Prostate gland (tissue), 2 donors: ENCODE measurements at regions of chr17 and their contacts with region 1.

Region 1: DNA sequence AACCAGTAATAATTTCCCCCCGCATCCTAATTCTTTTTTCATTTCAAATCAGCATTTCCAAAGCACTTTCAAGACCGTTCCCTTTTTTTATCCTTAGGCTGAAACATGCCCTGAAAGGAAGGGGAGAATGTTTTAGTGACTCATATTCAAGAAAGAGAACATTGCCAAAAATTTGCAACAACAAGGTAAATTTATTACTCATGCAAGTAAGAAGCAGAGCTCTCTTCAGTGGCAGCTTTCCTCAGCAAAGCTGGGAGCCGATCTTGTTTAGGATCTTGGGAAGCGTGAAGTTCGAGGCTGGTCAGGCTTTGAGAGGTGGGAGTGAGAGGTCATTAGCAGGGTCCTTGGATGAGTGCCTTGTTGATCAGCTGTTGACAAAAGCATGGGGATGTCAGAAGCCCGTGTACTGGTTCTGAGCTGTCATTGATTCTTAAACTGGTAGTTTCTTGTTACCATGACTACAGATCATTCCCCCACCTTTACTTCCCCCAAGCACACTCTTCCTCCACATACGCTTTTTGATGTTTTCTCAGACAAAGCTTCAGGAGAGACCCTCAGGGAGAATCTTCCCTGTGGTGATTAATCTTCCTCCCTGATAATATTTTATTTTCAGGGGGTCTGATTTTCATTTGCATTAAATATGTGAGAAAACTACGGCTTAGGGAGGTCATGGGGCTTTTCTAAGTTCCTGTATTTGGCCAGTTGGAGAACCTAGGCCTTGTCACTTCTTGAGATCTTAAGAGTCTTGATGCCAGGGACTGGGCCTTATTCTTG is 129.7 kb downstream of the PRKCA start:
- DNase-seq: no peak
- H3K4me3 ChIP-seq: no peak overlapping the region
- H3K27ac ChIP-seq: peak overlapping the region in 1 of 2 donors; percentile 37
- H3K4me1 ChIP-seq: no peaks in the 10 kb centered on the region
- H3K27me3 ChIP-seq: no peaks in the 10 kb centered on the region
- CTCF ChIP-seq: no peak
- POLR2A ChIP-seq: no peak

Region 2: DNA sequence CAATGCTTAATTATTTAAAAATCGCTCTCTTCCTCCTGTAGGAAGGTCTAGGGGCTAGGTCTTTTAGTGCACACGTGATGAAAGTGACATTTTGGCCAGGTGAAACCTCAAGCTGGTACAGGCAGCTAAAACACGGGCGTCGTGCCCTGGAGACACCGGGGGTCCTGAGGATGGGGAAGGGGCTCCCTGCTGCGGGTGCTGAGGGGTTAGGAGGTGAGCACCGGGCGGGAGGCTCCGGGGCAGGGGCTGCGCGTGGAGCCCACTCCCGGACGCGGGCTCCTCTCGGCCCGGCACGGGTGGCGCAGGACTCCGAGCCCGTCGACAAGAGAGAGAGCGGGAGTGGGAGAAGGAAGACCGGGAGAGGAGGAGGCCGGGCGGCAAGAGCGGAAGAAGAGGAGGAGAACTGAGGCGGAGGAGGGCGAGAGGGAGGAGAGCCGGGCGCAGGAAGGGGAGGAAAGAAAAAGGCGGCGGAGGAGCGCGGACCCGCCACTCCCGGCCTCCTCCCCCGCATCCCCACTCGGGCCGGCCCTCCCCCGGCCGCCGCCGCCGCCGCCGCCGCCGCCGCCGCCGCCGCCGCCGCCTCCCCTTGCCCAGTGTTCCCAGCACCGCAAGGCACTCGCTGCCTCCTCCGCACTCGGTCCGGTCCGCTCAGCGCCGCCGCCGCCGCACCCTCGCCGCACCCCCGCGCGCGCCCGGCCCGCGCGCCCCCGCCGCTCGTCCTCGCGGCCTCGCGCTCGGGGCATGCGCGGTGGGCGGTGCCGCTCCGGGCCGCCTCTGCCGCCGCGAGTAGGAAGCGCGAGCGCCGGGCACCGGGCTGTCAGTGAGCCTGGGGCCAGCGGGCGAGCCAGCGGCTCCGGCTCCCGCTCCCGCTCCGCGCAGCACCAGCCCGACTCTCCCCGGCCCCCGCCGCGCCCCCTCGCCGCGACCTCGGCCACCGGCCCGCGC is 130.0 kb before region 1 on chr17 and contains the start of gene PRKCA:
- intact Hi-C with region 1: loop called (anchors 5 kb)
- DNase-seq: peak; percentile 64
- H3K4me3 ChIP-seq: peak within 1 kb of the TSS; percentile 46 to 64
- H3K27ac ChIP-seq: peak within 1 kb of the TSS; percentile 79
- H3K4me1 ChIP-seq: no peaks in the 10 kb centered on the region
- H3K27me3 ChIP-seq: no peaks in the 10 kb centered on the region
- CTCF ChIP-seq: no peak
- POLR2A ChIP-seq: peak; percentile 82
- total RNA-seq, gene PRKCA: 8.3 to 26.5 TPM

Region 3: GRCh38 chr17:66383333-66383732 is 48.8 kb before region 1 on chr17:
- intact Hi-C with region 1: no loop called
- DNase-seq: no peak
- H3K4me3 ChIP-seq: no peak overlapping the region
- H3K27ac ChIP-seq: no peak overlapping the region
- H3K4me1 ChIP-seq: no peaks in the 10 kb centered on the region
- H3K27me3 ChIP-seq: no peaks in the 10 kb centered on the region
- CTCF ChIP-seq: no peak
- POLR2A ChIP-seq: no peak

Region 4: GRCh38 chr17:66466840-66467367 is 34.8 kb after region 1 on chr17:
- intact Hi-C with region 1: loop called (anchors 5 kb)
- DNase-seq: no peak
- H3K4me3 ChIP-seq: no peak overlapping the region
- H3K27ac ChIP-seq: no peak overlapping the region
- H3K4me1 ChIP-seq: no peaks in the 10 kb centered on the region
- H3K27me3 ChIP-seq: no peaks in the 10 kb centered on the region
- CTCF ChIP-seq: no peak
- POLR2A ChIP-seq: no peak

Region 5: GRCh38 chr17:66514227-66514806 is 82.2 kb after region 1 on chr17:
- intact Hi-C with region 1: no loop called
- DNase-seq: no peak
- H3K4me3 ChIP-seq: no peak overlapping the region
- H3K27ac ChIP-seq: no peak overlapping the region
- H3K4me1 ChIP-seq: peaks cover 5% of the 10 kb centered on the region
- H3K27me3 ChIP-seq: no peaks in the 10 kb centered on the region
- CTCF ChIP-seq: no peak
- POLR2A ChIP-seq: no peak

Region 6: GRCh38 chr17:66533572-66533971 is 101.5 kb after region 1 on chr17:
- intact Hi-C with region 1: loop called (anchors 5 kb)
- DNase-seq: peak; percentile 15
- H3K4me3 ChIP-seq: no peak overlapping the region
- H3K27ac ChIP-seq: peak overlapping the region; percentile 12 to 27
- H3K4me1 ChIP-seq: no peaks in the 10 kb centered on the region
- H3K27me3 ChIP-seq: no peaks in the 10 kb centered on the region
- CTCF ChIP-seq: peak in 1 of 4 experiments; percentile 6
- POLR2A ChIP-seq: no peak

Region 7: GRCh38 chr17:66578781-66579489 is 146.8 kb after region 1 on chr17:
- intact Hi-C with region 1: loop called (anchors 5 kb)
- DNase-seq: no peak
- H3K4me3 ChIP-seq: no peak overlapping the region
- H3K27ac ChIP-seq: peak overlapping the region; percentile 45 to 53
- H3K4me1 ChIP-seq: no peaks in the 10 kb centered on the region
- H3K27me3 ChIP-seq: no peaks in the 10 kb centered on the region
- CTCF ChIP-seq: no peak
- POLR2A ChIP-seq: no peak